A549 (cell line): ENCODE measurements at regions of chr1 and their contacts with region 1.

Region 1: DNA sequence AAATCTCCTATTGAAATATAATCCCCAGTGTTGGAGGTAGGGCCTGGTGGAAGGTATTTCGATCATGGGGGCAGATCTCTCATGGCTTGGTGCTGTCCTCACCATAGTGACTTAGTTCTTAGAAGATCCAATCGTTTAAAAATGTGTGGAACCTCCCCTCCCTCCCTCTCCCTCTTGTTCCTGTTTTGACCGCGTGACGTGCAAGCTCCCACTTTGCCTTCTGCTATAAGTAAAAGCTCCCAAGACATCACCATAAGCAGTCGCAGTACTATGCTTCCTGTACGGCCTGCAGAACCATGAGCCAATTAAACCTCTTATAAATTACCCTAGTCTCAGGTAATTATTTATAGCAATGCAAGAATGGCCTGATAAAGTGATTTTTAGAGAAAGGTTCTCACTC is 10.9 kb upstream of the RGS2 start:
- DNase-seq: no peak
- ATAC-seq: no peak
- H3K4me3 ChIP-seq: no peak overlapping the region
- H3K27ac ChIP-seq: no peak overlapping the region
- H3K4me1 ChIP-seq: no peaks in the 10 kb centered on the region
- CTCF ChIP-seq: no peak
- EP300 ChIP-seq: no peak
- POLR2A ChIP-seq: no peak
- RAD21 ChIP-seq: no peak

Region 2: GRCh38 chr1:192892934-192893333 is 95.0 kb after region 1 on chr1:
- CTCF ChIA-PET with region 1: no interaction called
- POLR2A ChIA-PET with region 1: no interaction called
- DNase-seq: no peak
- ATAC-seq: no peak
- H3K4me3 ChIP-seq: no peak overlapping the region
- H3K27ac ChIP-seq: no peak overlapping the region
- H3K4me1 ChIP-seq: no peaks in the 10 kb centered on the region
- CTCF ChIP-seq: no peak
- EP300 ChIP-seq: no peak
- POLR2A ChIP-seq: no peak
- RAD21 ChIP-seq: no peak

Region 3: GRCh38 chr1:193019442-193020026 is 221.6 kb after region 1 on chr1:
- CTCF ChIA-PET with region 1: interaction called, 12 read pairs
- POLR2A ChIA-PET with region 1: no interaction called
- DNase-seq: peak; percentile 25 to 63
- ATAC-seq: peak; percentile 59 to 80; a peak in 5 of 6 replicates
- H3K4me3 ChIP-seq: no peak overlapping the region
- H3K27ac ChIP-seq: peak overlapping the region in 1 of 2 experiments; percentile 6; a peak in 1 of 6 replicates
- H3K4me1 ChIP-seq: peaks cover 5% of the 10 kb centered on the region; the same call in 2 of the 3 replicates
- CTCF ChIP-seq: peak; percentile 86
- EP300 ChIP-seq: no peak
- POLR2A ChIP-seq: no peak
- RAD21 ChIP-seq: peak; percentile 77 to 82